Left ventricle myocardium inferior (tissue), 1 donor: ENCODE measurements at regions of chr10 and their contacts with region 1.

Region 1: GRCh38 chr10:34628174-34628796 is 186.8 kb downstream of the PARD3 start:
- DNase-seq: peak; percentile 78
- H3K4me3 ChIP-seq: no peak overlapping the region
- H3K27ac ChIP-seq: no peak overlapping the region
- H3K4me1 ChIP-seq: peaks cover 41% of the 10 kb centered on the region
- H3K27me3 ChIP-seq: no peaks in the 10 kb centered on the region
- CTCF ChIP-seq: no peak

Region 2: GRCh38 chr10:34522546-34522945 is 105.7 kb before region 1 on chr10:
- intact Hi-C with region 1: loop called (anchors 10 kb)
- DNase-seq: no peak
- H3K4me3 ChIP-seq: no peak overlapping the region
- H3K27ac ChIP-seq: no peak overlapping the region
- H3K4me1 ChIP-seq: peaks cover 15% of the 10 kb centered on the region
- H3K27me3 ChIP-seq: no peaks in the 10 kb centered on the region
- CTCF ChIP-seq: peak; percentile 53

Region 3: GRCh38 chr10:34696423-34696822 is 68.1 kb after region 1 on chr10:
- intact Hi-C with region 1: no loop called
- DNase-seq: no peak
- H3K4me3 ChIP-seq: no peak overlapping the region
- H3K27ac ChIP-seq: no peak overlapping the region
- H3K4me1 ChIP-seq: peaks cover 42% of the 10 kb centered on the region
- H3K27me3 ChIP-seq: no peaks in the 10 kb centered on the region
- CTCF ChIP-seq: no peak